ENCODE measurements at regions of chr7 and their contacts with region 1.

Region 1: DNA sequence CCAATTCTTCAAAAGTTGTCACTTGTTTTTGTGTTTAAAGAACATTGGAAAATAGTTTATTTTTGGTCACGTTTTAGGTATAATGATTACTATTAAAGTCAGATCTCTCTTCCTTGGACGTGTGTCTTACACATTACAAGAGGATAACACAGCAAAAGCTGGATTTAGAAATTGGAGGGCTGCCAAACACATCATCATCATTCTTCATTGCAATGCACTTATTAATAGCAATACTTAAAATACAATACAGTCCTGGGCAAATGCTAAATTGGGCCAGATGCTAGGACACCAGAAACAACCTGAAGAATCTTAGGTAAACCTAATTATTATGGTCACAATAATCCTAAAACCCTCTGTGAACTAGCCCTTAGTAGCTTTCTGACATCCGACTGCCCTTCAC is 303.6 kb downstream of the DGKB start:
- DNase-seq: peak; percentile 50
- ATAC-seq: no peak
- H3K4me3 ChIP-seq: no peak overlapping the region
- H3K27ac ChIP-seq: no peak overlapping the region
- H3K4me1 ChIP-seq: peaks cover 46% of the 10 kb centered on the region
- H3K27me3 ChIP-seq: no peaks in the 10 kb centered on the region
- CTCF ChIP-seq: no peak

Region 2: DNA sequence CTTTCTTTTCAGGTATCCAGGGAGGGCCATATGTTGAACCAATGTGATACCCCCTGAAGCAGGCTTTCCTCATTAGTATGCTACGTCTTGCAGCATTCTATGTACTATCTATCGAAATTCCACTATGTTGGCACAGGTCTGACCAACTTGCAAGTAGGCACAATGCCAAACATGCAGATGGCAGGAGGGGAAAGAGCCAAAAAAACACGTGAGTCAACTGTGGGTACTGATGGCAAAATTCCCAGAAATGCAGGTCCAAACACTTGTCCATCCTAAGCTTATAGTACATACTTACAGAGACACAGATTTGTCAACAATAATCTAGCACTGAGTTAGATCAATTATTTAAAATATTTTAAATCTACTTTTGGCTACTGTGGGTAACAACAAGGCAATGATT is 91.4 kb before region 1 on chr7:
- CTCF ChIA-PET with region 1: no interaction called
- POLR2A ChIA-PET with region 1: no interaction called
- intact Hi-C with region 1: loop called (anchors 5 kb)
- DNase-seq: peak; percentile 94
- ATAC-seq: peak; percentile 93
- H3K4me3 ChIP-seq: no peak overlapping the region
- H3K27ac ChIP-seq: no peak overlapping the region
- H3K4me1 ChIP-seq: peaks cover 14% of the 10 kb centered on the region; the same call in 1 of the 2 replicates
- H3K27me3 ChIP-seq: no peaks in the 10 kb centered on the region
- CTCF ChIP-seq: no peak

Region 3: GRCh38 chr7:14521183-14521582 is 77.8 kb before region 1 on chr7:
- CTCF ChIA-PET with region 1: no interaction called
- POLR2A ChIA-PET with region 1: no interaction called
- intact Hi-C with region 1: loop called (anchors 5 kb)
- DNase-seq: no peak
- ATAC-seq: no peak
- H3K4me3 ChIP-seq: no peak overlapping the region
- H3K27ac ChIP-seq: no peak overlapping the region
- H3K4me1 ChIP-seq: no peaks in the 10 kb centered on the region
- H3K27me3 ChIP-seq: no peaks in the 10 kb centered on the region
- CTCF ChIP-seq: no peak